ENCODE measurements at regions of chr6 and their contacts with region 1.

Region 1: DNA sequence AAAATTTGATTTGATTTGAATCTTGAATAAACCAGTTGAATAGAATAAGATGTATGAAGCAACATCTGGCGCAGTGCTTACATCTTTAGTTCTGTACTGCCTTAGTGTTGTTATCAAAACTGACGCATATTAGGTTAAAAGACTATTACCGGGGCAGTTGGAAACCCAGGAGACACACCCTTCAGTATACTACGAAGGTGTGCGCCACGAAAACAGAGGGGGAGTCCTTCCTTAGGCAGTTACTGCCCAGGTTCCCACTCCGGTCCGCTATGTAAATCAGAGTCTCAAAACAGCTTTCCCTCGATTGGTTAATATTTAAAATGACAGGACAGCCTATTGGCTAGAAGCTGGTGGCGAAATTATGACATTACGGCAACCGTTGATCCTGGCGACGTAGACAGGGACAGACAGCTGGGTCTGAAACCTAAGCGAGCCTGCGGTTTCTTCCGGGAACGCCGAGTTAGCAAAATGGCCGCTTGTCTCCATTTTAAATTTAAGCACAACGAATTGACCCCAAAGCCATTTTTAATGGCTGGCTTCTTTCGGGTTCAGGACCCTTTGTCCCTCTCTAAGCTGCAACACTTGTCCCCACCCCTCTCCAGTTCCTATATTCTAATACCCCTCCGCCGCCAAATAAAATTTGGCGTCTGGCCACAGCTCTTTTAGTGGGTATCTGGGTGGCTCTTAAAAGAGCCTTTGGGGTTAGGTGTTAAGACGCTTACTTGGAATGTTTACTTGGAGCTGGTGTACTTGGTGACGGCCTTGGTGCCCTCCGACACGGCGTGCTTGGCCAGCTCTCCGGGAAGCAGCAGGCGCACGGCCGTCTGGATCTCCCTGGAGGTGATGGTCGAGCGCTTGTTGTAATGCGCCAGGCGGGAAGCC is 35.8 kb downstream of the HFE start:
- DNase-seq: peak; percentile 68 to 99 (median 96)
- ATAC-seq: peak; percentile 78
- H3K4me3 ChIP-seq: peak overlapping the region; percentile 94
- H3K4me3 Mint-ChIP-seq: peak overlapping the region; percentile 92 to 100 (median 98)
- H3K27ac ChIP-seq: peak overlapping the region; percentile 86
- H3K27ac Mint-ChIP-seq: peak overlapping the region; percentile 97 to 100 (median 99)
- H3K4me1 ChIP-seq: peaks cover 18 to 23% of the 10 kb centered on the region in 2 donors
- H3K4me1 Mint-ChIP-seq: peaks cover 22 to 54% (median 30%) of the 10 kb centered on the region in 7 donors
- H3K27me3 ChIP-seq: no peaks in the 10 kb centered on the region
- H3K27me3 Mint-ChIP-seq: peaks cover 0 to 21% (median 0%) of the 10 kb centered on the region in 5 donors

Region 2: GRCh38 chr6:25553502-25553901 is 569.5 kb before region 1 on chr6:
- CTCF ChIA-PET with region 1: no interaction called
- POLR2A ChIA-PET with region 1: no interaction called
- intact Hi-C with region 1: no loop called
- DNase-seq: no peak
- ATAC-seq: no peak
- H3K4me3 ChIP-seq: no peak overlapping the region
- H3K4me3 Mint-ChIP-seq: no peak overlapping the region
- H3K27ac ChIP-seq: no peak overlapping the region
- H3K27ac Mint-ChIP-seq: no peak overlapping the region
- H3K4me1 ChIP-seq: no peaks in the 10 kb centered on the region
- H3K4me1 Mint-ChIP-seq: peaks cover 0 to 6% (median 3%) of the 10 kb centered on the region in 7 donors
- H3K27me3 ChIP-seq: no peaks in the 10 kb centered on the region
- H3K27me3 Mint-ChIP-seq: peaks cover 0 to 3% (median 0%) of the 10 kb centered on the region in 5 donors

Region 3: DNA sequence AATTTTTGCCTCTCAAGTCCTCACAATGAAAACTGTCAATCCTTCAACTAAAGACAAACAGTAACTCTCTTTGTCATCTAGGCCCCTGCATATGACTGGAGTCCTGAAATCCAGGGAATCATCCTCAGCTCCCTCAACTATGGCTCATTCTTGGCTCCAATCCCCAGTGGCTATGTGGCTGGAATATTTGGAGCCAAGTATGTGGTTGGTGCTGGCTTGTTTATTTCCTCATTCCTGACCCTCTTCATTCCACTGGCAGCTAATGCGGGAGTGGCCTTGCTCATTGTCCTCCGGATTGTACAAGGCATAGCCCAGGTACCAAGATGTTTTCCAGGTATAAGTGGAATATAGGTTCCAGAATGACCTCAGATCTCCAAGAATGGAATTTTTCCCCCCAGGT is 353.0 kb before region 1 on chr6:
- CTCF ChIA-PET with region 1: no interaction called
- POLR2A ChIA-PET with region 1: no interaction called
- intact Hi-C with region 1: no loop called
- DNase-seq: no peak
- ATAC-seq: no peak
- H3K4me3 ChIP-seq: no peak overlapping the region
- H3K4me3 Mint-ChIP-seq: no peak overlapping the region
- H3K27ac ChIP-seq: no peak overlapping the region
- H3K27ac Mint-ChIP-seq: no peak overlapping the region
- H3K4me1 ChIP-seq: no peaks in the 10 kb centered on the region
- H3K4me1 Mint-ChIP-seq: no peaks in the 10 kb centered on the region
- H3K27me3 ChIP-seq: no peaks in the 10 kb centered on the region
- H3K27me3 Mint-ChIP-seq: peaks cover 9 to 32% (median 16%) of the 10 kb centered on the region in 5 donors

Region 4: GRCh38 chr6:26031595-26032339 is 91.3 kb before region 1 on chr6:
- CTCF ChIA-PET with region 1: no interaction called
- POLR2A ChIA-PET with region 1: interaction called, 413 read pairs
- intact Hi-C with region 1: loop called (anchors 1 kb)
- DNase-seq: peak; percentile 56 to 94 (median 90)
- ATAC-seq: peak; percentile 79
- H3K4me3 ChIP-seq: peak overlapping the region; percentile 70
- H3K4me3 Mint-ChIP-seq: peak overlapping the region; percentile 89 to 98 (median 96)
- H3K27ac ChIP-seq: peak overlapping the region; percentile 69
- H3K27ac Mint-ChIP-seq: peak overlapping the region; percentile 93 to 98 (median 96)
- H3K4me1 ChIP-seq: peaks cover 23 to 31% of the 10 kb centered on the region in 2 donors
- H3K4me1 Mint-ChIP-seq: peaks cover 14 to 69% (median 43%) of the 10 kb centered on the region in 7 donors
- H3K27me3 ChIP-seq: no peaks in the 10 kb centered on the region
- H3K27me3 Mint-ChIP-seq: peaks cover 0 to 7% (median 0%) of the 10 kb centered on the region in 5 donors

Region 5: GRCh38 chr6:26087284-26088115 is 35.5 kb before region 1 on chr6 and contains the start of gene HFE:
- CTCF ChIA-PET with region 1: interaction called, 3 read pairs
- POLR2A ChIA-PET with region 1: interaction called, 36 read pairs
- intact Hi-C with region 1: no loop called
- DNase-seq: peak in 8 of 9 donors; percentile 32 to 46 (median 38)
- ATAC-seq: peak; percentile 41
- H3K4me3 ChIP-seq: peak within 1 kb of the TSS; percentile 88
- H3K4me3 Mint-ChIP-seq: peak within 1 kb of the TSS; percentile 84 to 91 (median 88)
- H3K27ac ChIP-seq: peak within 1 kb of the TSS; percentile 72
- H3K27ac Mint-ChIP-seq: peak within 1 kb of the TSS; percentile 73 to 91 (median 84)
- H3K4me1 ChIP-seq: peaks cover 18 to 23% of the 10 kb centered on the region in 2 donors
- H3K4me1 Mint-ChIP-seq: peaks cover 31 to 51% (median 39%) of the 10 kb centered on the region in 7 donors
- H3K27me3 ChIP-seq: no peaks in the 10 kb centered on the region
- H3K27me3 Mint-ChIP-seq: peaks cover 0 to 5% (median 5%) of the 10 kb centered on the region in 5 donors
- total RNA-seq, gene HFE: 1.5 to 4.6 (median 2.5) TPM

Region 6: DNA sequence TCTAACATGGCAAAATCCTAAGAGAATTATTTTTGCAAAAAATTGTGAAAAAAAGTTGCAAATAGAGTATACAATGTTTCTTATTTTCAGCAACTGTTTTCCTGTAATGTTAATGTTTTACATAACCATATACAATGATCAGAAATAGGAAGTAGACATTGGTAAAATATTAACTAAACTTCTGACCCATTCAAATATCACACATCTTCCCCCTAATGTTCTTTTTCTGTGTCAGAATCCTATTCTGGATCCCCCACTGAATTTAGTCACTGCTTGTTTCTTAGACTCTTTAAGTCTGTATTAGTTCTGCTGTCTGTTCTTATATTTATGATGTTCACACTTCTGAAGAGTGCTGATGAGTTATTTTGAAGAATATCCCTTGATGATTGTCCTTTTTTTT is 26.2 kb after region 1 on chr6:
- CTCF ChIA-PET with region 1: no interaction called
- POLR2A ChIA-PET with region 1: interaction called, 2,532 read pairs
- intact Hi-C with region 1: no loop called
- DNase-seq: no peak
- ATAC-seq: no peak
- H3K4me3 ChIP-seq: no peak overlapping the region
- H3K4me3 Mint-ChIP-seq: no peak overlapping the region
- H3K27ac ChIP-seq: no peak overlapping the region
- H3K27ac Mint-ChIP-seq: no peak overlapping the region
- H3K4me1 ChIP-seq: no peaks in the 10 kb centered on the region
- H3K4me1 Mint-ChIP-seq: peaks cover 0 to 11% (median 0%) of the 10 kb centered on the region in 7 donors
- H3K27me3 ChIP-seq: no peaks in the 10 kb centered on the region
- H3K27me3 Mint-ChIP-seq: peaks cover 0 to 8% (median 0%) of the 10 kb centered on the region in 5 donors

Region 7: GRCh38 chr6:26204332-26205165 is 81.5 kb after region 1 on chr6:
- CTCF ChIA-PET with region 1: interaction called, 4 read pairs
- POLR2A ChIA-PET with region 1: interaction called, 764 read pairs
- intact Hi-C with region 1: loop called (anchors 1 kb)
- DNase-seq: peak; percentile 67 to 95 (median 89)
- ATAC-seq: peak; percentile 72
- H3K4me3 ChIP-seq: peak overlapping the region; percentile 77
- H3K4me3 Mint-ChIP-seq: no peak overlapping the region
- H3K27ac ChIP-seq: peak overlapping the region; percentile 90
- H3K27ac Mint-ChIP-seq: no peak overlapping the region
- H3K4me1 ChIP-seq: peaks cover 20 to 23% of the 10 kb centered on the region in 2 donors
- H3K4me1 Mint-ChIP-seq: peaks cover 9 to 36% (median 26%) of the 10 kb centered on the region in 7 donors
- H3K27me3 ChIP-seq: no peaks in the 10 kb centered on the region
- H3K27me3 Mint-ChIP-seq: peaks cover 0 to 5% (median 0%) of the 10 kb centered on the region in 5 donors

Region 8: GRCh38 chr6:27146706-27147505 is 1023.9 kb after region 1 on chr6:
- CTCF ChIA-PET with region 1: no interaction called
- POLR2A ChIA-PET with region 1: interaction called, 76 read pairs
- intact Hi-C with region 1: loop called in 1 of 2 experiments (anchors 1 kb)
- DNase-seq: peak; percentile 71 to 96 (median 92)
- ATAC-seq: peak; percentile 92
- H3K4me3 ChIP-seq: peak overlapping the region; percentile 90
- H3K4me3 Mint-ChIP-seq: no peak overlapping the region
- H3K27ac ChIP-seq: peak overlapping the region; percentile 89
- H3K27ac Mint-ChIP-seq: no peak overlapping the region
- H3K4me1 ChIP-seq: peaks cover 6 to 7% of the 10 kb centered on the region in 2 donors
- H3K4me1 Mint-ChIP-seq: peaks cover 0 to 26% (median 14%) of the 10 kb centered on the region in 7 donors
- H3K27me3 ChIP-seq: no peaks in the 10 kb centered on the region
- H3K27me3 Mint-ChIP-seq: no peaks in the 10 kb centered on the region

Region 9: GRCh38 chr6:27505209-27506027 is 1382.4 kb after region 1 on chr6:
- CTCF ChIA-PET with region 1: no interaction called
- POLR2A ChIA-PET with region 1: no interaction called
- intact Hi-C with region 1: no loop called
- DNase-seq: peak in 7 of 9 donors; percentile 38 to 78 (median 50)
- ATAC-seq: peak; percentile 42
- H3K4me3 ChIP-seq: no peak overlapping the region
- H3K4me3 Mint-ChIP-seq: peak overlapping the region in 6 of 10 donors; percentile 1 to 68 (median 24)
- H3K27ac ChIP-seq: no peak overlapping the region
- H3K27ac Mint-ChIP-seq: peak overlapping the region in 8 of 9 donors; percentile 0 to 94 (median 40)
- H3K4me1 ChIP-seq: peaks cover 6% of the 10 kb centered on the region in 2 donors
- H3K4me1 Mint-ChIP-seq: peaks cover 15 to 41% (median 36%) of the 10 kb centered on the region in 7 donors
- H3K27me3 ChIP-seq: no peaks in the 10 kb centered on the region
- H3K27me3 Mint-ChIP-seq: peaks cover 14 to 61% (median 19%) of the 10 kb centered on the region in 5 donors

Region 10: DNA sequence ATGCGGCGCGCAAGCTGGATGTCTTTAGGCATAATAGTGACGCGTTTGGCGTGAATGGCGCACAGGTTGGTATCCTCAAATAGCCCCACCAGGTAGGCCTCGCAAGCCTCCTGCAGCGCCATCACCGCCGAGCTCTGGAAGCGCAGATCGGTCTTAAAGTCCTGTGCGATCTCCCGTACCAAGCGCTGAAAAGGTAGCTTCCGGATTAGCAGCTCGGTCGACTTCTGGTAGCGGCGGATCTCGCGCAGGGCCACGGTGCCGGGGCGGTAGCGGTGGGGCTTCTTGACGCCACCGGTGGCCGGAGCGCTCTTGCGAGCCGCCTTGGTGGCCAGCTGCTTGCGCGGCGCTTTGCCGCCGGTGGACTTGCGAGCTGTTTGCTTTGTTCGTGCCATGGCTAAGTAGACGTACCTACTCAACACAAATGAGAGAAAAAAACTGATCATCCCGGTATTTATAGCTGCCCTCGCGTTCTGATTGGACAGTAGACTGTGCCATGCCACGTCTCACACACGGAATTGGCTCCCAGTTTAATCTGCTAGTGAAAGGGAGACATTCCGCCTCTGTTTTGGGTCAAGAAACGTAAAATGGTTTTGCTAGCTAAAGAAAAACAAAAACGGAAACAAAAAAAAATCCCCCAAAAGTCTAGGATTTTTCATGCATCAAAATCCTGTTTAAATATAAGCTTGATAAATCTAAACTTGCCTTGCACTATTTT is 1749.0 kb after region 1 on chr6:
- CTCF ChIA-PET with region 1: no interaction called
- POLR2A ChIA-PET with region 1: interaction called, 56 read pairs
- intact Hi-C with region 1: loop called in 1 of 2 experiments (anchors 2 kb)
- DNase-seq: peak; percentile 68 to 97 (median 94)
- ATAC-seq: peak; percentile 88
- H3K4me3 ChIP-seq: peak overlapping the region; percentile 69
- H3K4me3 Mint-ChIP-seq: peak overlapping the region; percentile 83 to 99 (median 94)
- H3K27ac ChIP-seq: peak overlapping the region; percentile 84
- H3K27ac Mint-ChIP-seq: peak overlapping the region; percentile 95 to 98 (median 97)
- H3K4me1 ChIP-seq: peaks cover under 1 to 19% of the 10 kb centered on the region in 2 donors
- H3K4me1 Mint-ChIP-seq: peaks cover 15 to 69% (median 42%) of the 10 kb centered on the region in 7 donors
- H3K27me3 ChIP-seq: no peaks in the 10 kb centered on the region
- H3K27me3 Mint-ChIP-seq: peaks cover 0 to 8% (median 0%) of the 10 kb centered on the region in 5 donors

Measured in naive thymus-derived CD4-positive, alpha-beta T cell (primary cell).